Breast epithelium (tissue), 4 donors: ENCODE measurements at regions of chr16 and their contacts with region 1.

Region 1: DNA sequence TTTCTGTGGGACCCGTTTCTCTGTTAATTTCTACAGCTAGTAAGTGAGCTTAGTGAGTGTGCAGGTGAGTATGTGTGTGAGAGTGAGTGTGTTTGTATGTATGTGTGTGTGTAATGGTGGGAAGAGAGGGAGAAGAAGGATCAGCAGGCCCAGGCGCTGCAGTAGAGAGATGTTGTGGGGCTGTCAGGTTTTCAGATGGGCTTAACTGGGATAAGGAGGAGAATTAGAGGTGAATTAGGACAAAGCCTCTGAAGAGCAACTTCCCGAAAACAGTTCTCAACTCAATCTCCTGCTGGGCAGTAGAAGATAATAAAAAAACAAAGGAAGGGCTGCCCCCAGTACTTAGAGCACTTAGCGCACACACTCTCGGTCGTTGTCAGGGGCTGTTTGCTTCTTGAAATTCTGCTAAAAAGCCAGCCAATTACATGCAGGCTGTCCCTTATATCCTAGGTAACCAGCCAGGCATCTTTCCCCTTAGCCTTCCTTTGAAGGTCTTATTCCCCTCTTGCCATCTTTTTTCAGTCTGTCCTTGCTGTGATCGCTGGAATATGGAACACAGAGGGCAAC is 63.4 kb downstream of the CLEC16A start:
- DNase-seq: no peak
- H3K4me3 ChIP-seq: no peak overlapping the region
- H3K27ac ChIP-seq: no peak overlapping the region
- H3K4me1 ChIP-seq: no peaks in the 10 kb centered on the region
- H3K27me3 ChIP-seq: no peaks in the 10 kb centered on the region
- CTCF ChIP-seq: no peak
- POLR2A ChIP-seq: no peak

Region 2: DNA sequence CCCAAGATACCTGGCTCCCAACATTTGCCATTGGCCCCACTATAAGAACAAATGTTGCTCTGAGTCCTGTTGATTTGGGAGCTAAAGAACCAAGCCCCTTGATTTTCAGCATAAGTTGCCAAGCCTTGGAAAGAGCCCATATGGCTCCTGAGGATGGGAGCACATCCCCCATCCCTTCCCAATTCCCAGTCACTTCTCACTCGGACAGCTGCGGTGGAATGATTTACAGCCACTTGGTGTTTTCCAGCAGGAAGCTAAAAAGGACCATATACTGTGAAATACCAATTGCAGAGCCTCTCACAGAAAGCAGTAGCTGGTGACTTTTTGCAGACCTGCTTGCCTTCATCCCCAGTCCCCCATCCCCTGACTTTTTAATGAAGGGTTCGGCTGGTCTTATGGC is 1350.2 kb before region 1 on chr16:
- intact Hi-C with region 1: no loop called
- DNase-seq: no peak
- H3K4me3 ChIP-seq: no peak overlapping the region
- H3K27ac ChIP-seq: no peak overlapping the region
- H3K4me1 ChIP-seq: no peaks in the 10 kb centered on the region
- H3K27me3 ChIP-seq: peaks cover 0 to 8% of the 10 kb centered on the region in 2 donors
- CTCF ChIP-seq: no peak
- POLR2A ChIP-seq: no peak

Region 3: GRCh38 chr16:11039696-11040095 is 31.9 kb after region 1 on chr16:
- intact Hi-C with region 1: loop called (anchors 2 kb)
- DNase-seq: no peak
- H3K4me3 ChIP-seq: no peak overlapping the region
- H3K27ac ChIP-seq: no peak overlapping the region
- H3K4me1 ChIP-seq: no peaks in the 10 kb centered on the region
- H3K27me3 ChIP-seq: no peaks in the 10 kb centered on the region
- CTCF ChIP-seq: no peak
- POLR2A ChIP-seq: no peak